Mucosa of descending colon (tissue), 3 donors: ENCODE measurements at regions of chr18 and their contacts with region 1.

Region 1: GRCh38 chr18:59697236-59697932 is at the start of gene CCBE1:
- DNase-seq: peak; percentile 66 to 86 (median 74)
- ATAC-seq: peak; percentile 90
- H3K4me3 ChIP-seq: no peak within 1 kb of the TSS
- H3K4me1 ChIP-seq: peaks cover 11% of the 10 kb centered on the region
- CTCF ChIP-seq: peak; percentile 70
- total RNA-seq, gene CCBE1: 1.6 to 54.7 (median 2.2) TPM

Region 2: GRCh38 chr18:59623456-59624368 is 73.7 kb before region 1 on chr18:
- intact Hi-C with region 1: loop called in 1 of 2 experiments (anchors 10 kb)
- DNase-seq: no peak
- ATAC-seq: no peak
- H3K4me3 ChIP-seq: no peak overlapping the region
- H3K4me1 ChIP-seq: no peaks in the 10 kb centered on the region
- CTCF ChIP-seq: no peak